HAP-1 (cell line): ENCODE measurements at regions of chrX and their contacts with region 1.

Region 1: DNA sequence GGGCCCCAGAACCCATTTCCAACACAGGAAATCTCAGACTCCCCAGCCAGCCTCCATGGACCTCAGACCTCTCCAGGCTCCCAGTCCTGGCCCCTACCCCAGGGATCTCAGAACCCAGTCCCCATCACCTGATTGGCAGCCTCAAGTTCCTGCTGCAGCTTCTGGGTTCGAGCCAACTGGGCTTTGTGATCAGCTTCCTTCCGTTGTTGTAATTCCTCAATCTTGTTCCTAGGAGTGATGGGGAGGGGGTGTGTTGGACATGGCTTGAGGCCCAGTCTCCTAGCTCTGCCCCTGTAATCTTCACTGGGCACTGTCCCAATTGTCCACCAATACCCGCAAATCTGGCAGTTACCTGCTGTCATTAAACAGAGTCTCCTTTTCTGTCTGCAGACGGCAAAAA is 12.6 kb downstream of the GRIPAP1 start:
- DNase-seq: no peak
- H3K4me3 ChIP-seq: no peak overlapping the region
- H3K4me1 ChIP-seq: no peaks in the 10 kb centered on the region
- H3K27me3 ChIP-seq: no peaks in the 10 kb centered on the region

Region 2: GRCh38 chrX:49100704-49101628 is 111.5 kb after region 1 on chrX:
- in situ Hi-C with region 1: loop called (anchors 10 kb)
- DNase-seq: peak; percentile 96 to 98
- H3K4me3 ChIP-seq: peak overlapping the region; percentile 82
- H3K4me1 ChIP-seq: peaks cover 13% of the 10 kb centered on the region
- H3K27me3 ChIP-seq: no peaks in the 10 kb centered on the region

Region 3: DNA sequence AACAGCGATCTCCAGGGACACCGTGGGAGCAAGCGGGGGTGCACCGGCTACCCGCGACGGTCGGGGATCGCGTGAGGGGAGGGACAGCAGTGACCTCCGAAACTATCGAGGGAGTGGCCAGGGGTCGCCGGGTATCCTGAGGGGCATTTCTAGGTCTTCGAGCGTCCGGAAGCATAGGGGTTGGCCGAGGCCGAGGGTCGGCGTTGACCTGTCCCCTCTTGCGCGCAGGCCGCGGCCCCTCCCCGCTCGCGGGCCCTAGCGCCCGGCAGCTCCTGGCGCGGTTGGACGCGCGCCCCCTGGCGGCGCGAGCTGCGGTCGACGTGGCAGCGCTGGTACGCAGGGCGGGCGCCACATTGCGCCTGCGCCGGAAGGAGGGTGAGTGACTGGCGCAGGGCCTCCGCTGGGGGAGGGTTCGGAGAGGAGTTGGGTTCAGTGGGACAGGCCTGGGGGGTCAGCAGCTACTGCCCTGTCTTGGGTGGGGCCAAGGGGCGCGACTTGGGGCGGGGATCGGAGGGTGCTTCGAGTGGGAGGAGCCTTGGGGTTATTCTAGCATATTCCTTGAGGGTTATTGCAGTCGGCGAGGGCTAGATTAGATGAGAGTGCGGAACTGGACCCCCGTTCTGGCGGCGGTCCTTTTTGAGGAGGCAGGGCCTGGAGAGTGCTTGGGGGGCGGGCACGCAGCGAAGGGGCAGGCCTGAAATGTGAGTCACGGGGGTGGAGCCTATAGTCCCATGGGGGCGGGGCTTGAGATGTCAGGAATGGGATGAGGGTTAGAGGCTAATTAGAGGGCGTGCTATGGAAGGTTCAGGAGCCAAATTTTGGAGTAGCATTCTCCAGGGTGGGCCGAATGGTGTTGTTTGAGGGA is 174.3 kb after region 1 on chrX:
- in situ Hi-C with region 1: no loop called
- DNase-seq: peak; percentile 85 to 98
- H3K4me3 ChIP-seq: peak overlapping the region; percentile 35
- H3K4me1 ChIP-seq: peaks cover 29% of the 10 kb centered on the region
- H3K27me3 ChIP-seq: no peaks in the 10 kb centered on the region